HCT116 (cell line): ENCODE measurements at regions of chr15 and their contacts with region 1.

Region 1: DNA sequence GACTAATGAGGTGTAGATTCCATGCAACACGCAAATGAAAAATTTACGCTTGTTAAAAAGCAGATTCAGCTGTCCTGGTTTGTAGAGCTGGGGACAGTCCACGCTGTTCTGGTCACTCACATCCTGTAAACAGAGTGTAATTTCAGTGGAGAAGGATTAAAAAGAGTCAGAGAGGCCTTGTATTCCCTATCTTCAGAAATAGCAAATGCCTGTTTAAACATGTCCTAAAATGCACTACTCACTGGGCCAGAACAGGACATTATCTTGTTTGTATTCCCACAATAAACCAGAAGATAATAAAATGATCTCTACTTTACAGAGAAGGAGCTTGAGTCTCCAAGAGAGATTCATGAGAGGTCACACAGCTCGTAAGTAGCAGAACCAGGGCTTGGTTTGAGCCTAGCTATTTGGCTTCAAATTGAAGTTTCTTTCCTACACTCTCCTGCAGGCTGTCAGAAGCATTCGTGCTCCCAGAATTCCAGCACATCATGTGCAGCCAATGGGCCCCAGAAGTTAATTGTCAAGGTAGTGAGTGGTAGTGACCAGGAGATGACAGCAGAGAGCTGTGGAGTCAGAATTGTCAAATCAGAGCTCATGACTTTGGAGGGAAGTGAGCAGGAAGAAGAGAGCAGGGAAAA is 242.5 kb downstream of the ATP8B4 start:
- DNase-seq: peak; percentile 12
- ATAC-seq: peak; percentile 73
- H3K4me3 ChIP-seq: no peak overlapping the region
- H3K27ac ChIP-seq: no peak overlapping the region
- H3K4me1 ChIP-seq: no peaks in the 10 kb centered on the region
- H3K27me3 ChIP-seq: no peaks in the 10 kb centered on the region
- CTCF ChIP-seq: peak; percentile 39 to 58 (median 50); a peak in 5 of 6 replicates
- POLR2A ChIP-seq: no peak
- RAD21 ChIP-seq: peak; percentile 67

Region 2: GRCh38 chr15:49471733-49472132 is 404.8 kb before region 1 on chr15:
- CTCF ChIA-PET with region 1: interaction called, 15 read pairs
- POLR2A ChIA-PET with region 1: no interaction called
- RAD21 ChIA-PET with region 1: no interaction called
- intact Hi-C with region 1: no loop called
- DNase-seq: no peak
- ATAC-seq: no peak
- H3K4me3 ChIP-seq: no peak overlapping the region
- H3K27ac ChIP-seq: no peak overlapping the region
- H3K4me1 ChIP-seq: no peaks in the 10 kb centered on the region
- H3K27me3 ChIP-seq: no peaks in the 10 kb centered on the region
- CTCF ChIP-seq: no peak
- POLR2A ChIP-seq: no peak
- RAD21 ChIP-seq: no peak

Region 3: GRCh38 chr15:49492824-49493223 is 383.7 kb before region 1 on chr15:
- CTCF ChIA-PET with region 1: no interaction called
- POLR2A ChIA-PET with region 1: no interaction called
- RAD21 ChIA-PET with region 1: no interaction called
- intact Hi-C with region 1: no loop called
- DNase-seq: no peak
- ATAC-seq: no peak
- H3K4me3 ChIP-seq: no peak overlapping the region
- H3K27ac ChIP-seq: no peak overlapping the region
- H3K4me1 ChIP-seq: no peaks in the 10 kb centered on the region
- H3K27me3 ChIP-seq: no peaks in the 10 kb centered on the region
- CTCF ChIP-seq: no peak
- POLR2A ChIP-seq: no peak
- RAD21 ChIP-seq: no peak

Region 4: DNA sequence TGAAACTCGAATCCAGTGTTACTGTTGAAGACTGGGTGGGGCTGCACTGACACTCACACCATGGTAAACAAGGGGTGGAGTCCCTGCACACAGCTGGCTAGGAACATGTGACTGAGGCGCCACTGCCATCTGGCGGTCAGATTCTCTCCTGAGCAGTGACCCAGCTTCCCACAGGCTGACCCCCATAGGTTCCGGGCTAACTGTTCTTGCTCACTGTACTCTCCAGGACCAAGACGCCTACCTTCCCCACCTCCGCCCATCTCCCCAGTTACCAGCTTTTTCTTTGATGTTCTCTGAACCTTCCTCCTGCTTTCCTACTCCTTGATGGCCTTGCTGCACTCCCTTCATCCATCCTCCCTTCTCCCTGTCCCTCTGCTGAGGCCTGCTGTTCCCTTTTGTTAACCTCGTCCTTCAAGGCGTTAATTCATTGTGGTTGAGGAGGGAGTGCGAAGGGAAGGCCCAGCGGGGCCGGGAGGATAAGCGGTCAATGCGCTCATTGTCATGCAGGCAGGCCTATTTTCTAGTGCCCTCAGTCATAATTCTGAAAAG is 127.3 kb after region 1 on chr15:
- CTCF ChIA-PET with region 1: interaction called, 61 read pairs
- POLR2A ChIA-PET with region 1: no interaction called
- RAD21 ChIA-PET with region 1: interaction called, 5 to 6 read pairs
- intact Hi-C with region 1: loop called (anchors 2 kb)
- DNase-seq: peak; percentile 80
- ATAC-seq: peak; percentile 100
- H3K4me3 ChIP-seq: no peak overlapping the region
- H3K27ac ChIP-seq: no peak overlapping the region
- H3K4me1 ChIP-seq: peaks cover 2 to 5% of the 10 kb centered on the region in 2 experiments; a peak in 3 of 4 replicates
- H3K27me3 ChIP-seq: no peaks in the 10 kb centered on the region
- CTCF ChIP-seq: peak; percentile 38 to 89 (median 84); a peak in 5 of 6 replicates
- POLR2A ChIP-seq: no peak
- RAD21 ChIP-seq: peak; percentile 77

Region 5: DNA sequence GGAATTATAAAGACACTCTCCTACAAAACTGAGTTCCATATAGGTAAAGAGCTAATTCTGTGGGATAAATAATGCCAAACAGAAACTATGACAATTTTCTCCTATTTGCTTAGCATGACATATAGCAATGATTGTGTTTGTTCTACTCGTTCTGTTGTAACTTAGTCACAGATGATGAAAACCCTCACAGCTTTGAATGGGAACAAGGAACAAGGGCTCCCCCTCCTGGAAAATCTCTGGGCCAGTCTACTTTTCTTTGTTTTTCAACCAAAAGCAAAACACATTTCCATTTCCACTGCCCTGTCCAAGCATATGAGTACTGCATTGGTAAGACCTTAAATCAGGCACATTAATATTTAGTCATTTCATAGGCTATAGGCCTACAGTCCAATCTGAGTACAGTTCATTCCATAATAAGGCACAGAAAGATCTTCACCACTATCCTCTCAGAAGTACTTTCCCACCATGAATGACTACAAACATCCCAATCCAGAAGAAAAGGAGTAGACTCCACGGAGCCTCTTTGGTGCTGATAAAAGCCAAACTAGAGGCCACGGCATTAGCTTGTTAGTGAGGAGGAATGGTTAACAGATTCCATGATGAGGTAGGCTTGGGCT is 175.4 kb after region 1 on chr15:
- CTCF ChIA-PET with region 1: interaction called, 8 read pairs
- POLR2A ChIA-PET with region 1: no interaction called
- RAD21 ChIA-PET with region 1: interaction called in 1 of 2 experiments, 3 read pairs
- intact Hi-C with region 1: loop called (anchors 10 kb)
- DNase-seq: peak; percentile 41
- ATAC-seq: peak; percentile 73
- H3K4me3 ChIP-seq: no peak overlapping the region
- H3K27ac ChIP-seq: no peak overlapping the region
- H3K4me1 ChIP-seq: no peaks in the 10 kb centered on the region
- H3K27me3 ChIP-seq: no peaks in the 10 kb centered on the region
- CTCF ChIP-seq: peak; percentile 42 to 74 (median 64); a peak in 5 of 6 replicates
- POLR2A ChIP-seq: no peak
- RAD21 ChIP-seq: peak; percentile 72

Region 6: DNA sequence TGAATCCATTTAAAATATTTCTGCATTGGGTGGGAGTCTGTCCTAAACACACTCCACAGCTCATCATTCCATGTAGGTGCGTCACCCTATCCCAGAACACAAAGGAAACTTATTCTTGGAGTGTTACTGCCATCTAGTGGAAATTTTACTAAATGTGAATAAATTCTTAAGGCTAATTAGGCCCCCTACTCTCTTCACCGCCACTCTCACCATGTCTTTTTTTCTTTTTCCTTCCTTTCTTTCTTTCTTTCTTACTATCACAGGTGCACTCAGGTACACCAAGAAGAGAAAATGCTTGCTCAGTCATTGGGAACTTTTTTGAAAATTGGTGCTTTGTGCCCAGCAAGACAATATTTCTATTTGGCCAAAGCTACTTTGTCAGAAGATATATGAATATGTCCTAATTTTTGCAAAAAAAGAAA is 268.9 kb after region 1 on chr15:
- CTCF ChIA-PET with region 1: interaction called, 22 read pairs
- POLR2A ChIA-PET with region 1: no interaction called
- RAD21 ChIA-PET with region 1: no interaction called
- intact Hi-C with region 1: loop called (anchors 1 kb)
- DNase-seq: peak; percentile 71
- ATAC-seq: peak; percentile 81
- H3K4me3 ChIP-seq: no peak overlapping the region
- H3K27ac ChIP-seq: no peak overlapping the region
- H3K4me1 ChIP-seq: peaks cover 2 to 23% of the 10 kb centered on the region in 2 experiments; a peak in 3 of 4 replicates
- H3K27me3 ChIP-seq: no peaks in the 10 kb centered on the region
- CTCF ChIP-seq: peak; percentile 17 to 61 (median 51); a peak in 3 of 6 replicates
- POLR2A ChIP-seq: no peak
- RAD21 ChIP-seq: peak; percentile 75

Region 7: GRCh38 chr15:50315814-50316630 is 439.5 kb after region 1 on chr15:
- CTCF ChIA-PET with region 1: interaction called, 16 read pairs
- POLR2A ChIA-PET with region 1: no interaction called
- RAD21 ChIA-PET with region 1: no interaction called
- intact Hi-C with region 1: no loop called
- DNase-seq: peak; percentile 31
- ATAC-seq: peak; percentile 62
- H3K4me3 ChIP-seq: no peak overlapping the region
- H3K27ac ChIP-seq: no peak overlapping the region
- H3K4me1 ChIP-seq: no peaks in the 10 kb centered on the region; a peak in 1 of 4 replicates
- H3K27me3 ChIP-seq: no peaks in the 10 kb centered on the region
- CTCF ChIP-seq: peak; percentile 57 to 75 (median 58); a peak in 5 of 6 replicates
- POLR2A ChIP-seq: no peak
- RAD21 ChIP-seq: peak; percentile 74